Left cardiac atrium (tissue), 4 donors: ENCODE measurements at regions of chr5 and their contacts with region 1.

Region 1: GRCh38 chr5:96807075-96807654 is 580 bp downstream of the ERAP1 start:
- DNase-seq: peak; percentile 86
- ATAC-seq: peak; percentile 79 to 83

Region 2: DNA sequence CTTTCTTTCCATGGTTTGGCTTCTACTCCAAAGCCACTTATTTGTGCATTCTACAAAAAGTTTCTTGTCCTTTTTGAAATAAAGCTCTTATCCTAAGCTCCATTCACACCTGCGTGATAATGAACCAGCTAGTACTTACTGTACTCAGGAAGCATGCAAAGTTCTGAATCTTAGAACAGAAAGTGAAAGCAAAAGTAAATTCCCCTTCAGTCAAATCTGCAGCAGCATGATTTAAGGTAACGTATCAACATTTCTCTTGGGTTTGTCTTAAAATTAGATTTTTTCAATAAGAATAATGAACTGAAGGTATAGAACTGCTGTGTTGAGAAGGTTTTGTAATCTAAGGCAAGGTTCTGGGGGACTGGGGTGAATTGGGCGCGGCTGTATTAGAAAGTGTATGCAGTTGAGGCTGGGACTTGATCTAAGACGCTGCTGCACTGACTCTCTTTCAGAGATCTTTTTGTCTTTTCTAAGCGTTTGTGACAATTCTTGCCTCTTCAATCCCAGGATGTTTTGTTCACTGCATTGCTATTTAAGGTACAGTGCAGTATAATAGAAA is 69.2 kb after region 1 on chr5 and contains the start of gene ERAP2:
- intact Hi-C with region 1: loop called in 1 of 2 experiments (anchors 5 kb)
- DNase-seq: no peak
- ATAC-seq: peak; percentile 66 to 70
- total RNA-seq, gene ERAP2: 6.5 to 9.5 TPM